IMR-90 (cell line): ENCODE measurements at regions of chr17 and their contacts with region 1.

Region 1: DNA sequence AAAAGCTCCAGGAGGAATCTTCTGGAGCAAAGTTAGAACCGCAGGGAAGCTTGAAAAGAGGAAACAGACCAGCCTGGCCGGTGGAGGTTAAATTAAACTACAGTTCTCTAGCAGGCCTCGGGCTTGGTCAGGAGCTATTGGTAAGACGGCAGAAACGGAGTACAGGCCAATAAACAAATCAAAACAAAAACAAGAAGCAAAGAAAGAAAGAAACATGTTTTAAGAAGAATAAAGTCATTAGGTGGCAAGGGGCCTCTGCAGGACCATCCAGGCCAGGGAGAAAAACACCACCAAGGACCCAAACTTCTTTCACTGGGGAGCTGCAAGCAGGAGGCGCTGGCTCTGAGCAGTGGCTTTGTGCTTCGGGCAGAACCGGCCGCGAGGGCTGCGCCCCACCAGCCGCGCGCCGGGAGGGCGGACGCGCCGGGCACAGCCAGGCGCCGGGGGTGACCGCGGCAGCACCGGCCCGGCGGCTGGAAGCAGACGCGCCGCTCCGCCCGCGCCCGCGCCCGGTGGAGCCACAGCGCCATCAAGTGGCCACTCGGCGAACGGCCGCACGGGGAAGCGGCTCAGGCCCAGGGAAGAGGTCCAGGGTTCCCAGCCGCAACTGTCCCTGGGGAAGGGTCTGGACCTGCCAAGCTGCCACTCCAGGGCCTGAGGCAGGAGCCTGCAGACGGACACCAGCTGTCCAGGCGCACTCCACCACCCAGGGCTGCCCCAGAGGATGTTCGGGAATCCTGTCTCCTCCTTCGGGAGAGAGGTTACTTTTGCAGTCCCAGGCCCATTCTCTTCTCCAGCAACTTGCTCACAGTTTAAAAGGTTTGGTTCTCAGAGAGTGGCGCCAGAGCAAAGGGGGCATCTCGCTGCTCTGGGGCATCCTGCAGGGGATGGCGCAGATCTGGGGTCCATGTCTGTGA is 419.4 kb downstream of the SOX9 start:
- DNase-seq: peak; percentile 61
- ATAC-seq: peak; percentile 98
- H3K4me3 ChIP-seq: peak overlapping the region; percentile 10; the same call in 1 of the 2 replicates
- H3K27ac ChIP-seq: peak overlapping the region; percentile 87
- H3K4me1 ChIP-seq: peaks cover 3% of the 10 kb centered on the region; the same call in 1 of the 2 replicates
- H3K27me3 ChIP-seq: no peaks in the 10 kb centered on the region
- CTCF ChIP-seq: peak; percentile 90
- POLR2A ChIP-seq: no peak; the same call in 1 of the 2 replicates
- RAD21 ChIP-seq: peak; percentile 95

Region 2: GRCh38 chr17:70767102-70767701 is 1773.0 kb before region 1 on chr17:
- CTCF ChIA-PET with region 1: no interaction called
- POLR2A ChIA-PET with region 1: no interaction called
- dilution Hi-C with region 1: no loop called
- in situ Hi-C with region 1: loop called (anchors 10 kb)
- intact Hi-C with region 1: loop called (anchors 1 kb)
- DNase-seq: peak; percentile 59
- ATAC-seq: peak; percentile 51; the same call in 1 of the 2 replicates
- H3K4me3 ChIP-seq: no peak overlapping the region
- H3K27ac ChIP-seq: no peak overlapping the region
- H3K4me1 ChIP-seq: no peaks in the 10 kb centered on the region
- H3K27me3 ChIP-seq: no peaks in the 10 kb centered on the region
- CTCF ChIP-seq: peak; percentile 78
- POLR2A ChIP-seq: no peak
- RAD21 ChIP-seq: peak; percentile 86

Region 3: GRCh38 chr17:71118039-71118438 is 1422.2 kb before region 1 on chr17:
- CTCF ChIA-PET with region 1: no interaction called
- POLR2A ChIA-PET with region 1: no interaction called
- dilution Hi-C with region 1: no loop called
- in situ Hi-C with region 1: loop called (anchors 25 kb)
- intact Hi-C with region 1: no loop called
- DNase-seq: peak; percentile 18
- ATAC-seq: no peak
- H3K4me3 ChIP-seq: no peak overlapping the region
- H3K27ac ChIP-seq: no peak overlapping the region
- H3K4me1 ChIP-seq: no peaks in the 10 kb centered on the region
- H3K27me3 ChIP-seq: no peaks in the 10 kb centered on the region
- CTCF ChIP-seq: peak; percentile 47
- POLR2A ChIP-seq: no peak
- RAD21 ChIP-seq: peak; percentile 61

Region 4: DNA sequence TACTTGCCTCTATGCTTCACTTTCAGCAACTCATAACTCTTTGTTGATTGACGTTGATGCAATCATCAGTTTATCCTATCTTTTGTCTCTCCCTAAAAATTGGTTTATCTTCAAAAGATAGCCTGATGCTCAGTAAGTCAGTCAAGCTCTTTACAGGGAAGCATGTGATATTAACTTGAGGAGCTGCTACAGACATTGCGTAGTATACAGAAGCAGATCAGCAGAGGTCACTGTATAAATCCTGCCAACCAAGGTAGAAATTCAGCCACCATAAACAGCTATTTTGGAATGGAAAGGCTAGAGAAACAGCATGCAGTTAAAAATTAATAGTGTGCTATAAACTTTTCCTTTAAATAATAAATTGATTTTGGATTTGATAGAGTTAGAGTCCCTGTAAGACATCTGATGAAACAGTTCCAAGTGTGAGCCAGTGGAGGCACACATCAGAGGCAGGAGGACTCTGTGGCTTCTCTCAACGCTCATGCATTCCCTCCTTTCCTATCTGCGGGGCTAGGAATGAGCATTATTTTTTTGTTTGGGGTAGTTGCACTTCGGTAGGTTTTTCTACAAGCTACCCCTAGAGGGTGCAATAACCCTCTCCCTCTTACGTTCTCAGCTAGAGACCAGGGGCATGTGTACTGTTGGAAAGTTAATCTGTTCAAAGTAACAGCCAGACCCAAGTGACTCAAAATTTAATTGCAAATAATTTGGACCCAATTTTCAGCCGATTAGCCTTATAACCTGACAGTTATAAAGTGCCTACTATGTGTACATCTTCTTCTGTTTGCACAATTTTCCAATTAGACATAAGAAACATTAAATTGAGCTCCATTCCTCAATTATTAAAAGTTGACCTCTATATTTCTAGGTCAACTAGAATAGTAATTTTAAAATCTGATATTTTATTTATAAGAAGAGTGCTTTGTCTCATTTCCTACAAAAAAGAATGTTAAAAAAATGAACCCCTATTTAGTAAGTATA is 1067.1 kb before region 1 on chr17:
- CTCF ChIA-PET with region 1: no interaction called
- POLR2A ChIA-PET with region 1: no interaction called
- dilution Hi-C with region 1: no loop called
- in situ Hi-C with region 1: loop called (anchors 10 kb)
- intact Hi-C with region 1: loop called (anchors 1 kb)
- DNase-seq: peak; percentile 70
- ATAC-seq: peak; percentile 95
- H3K4me3 ChIP-seq: no peak overlapping the region
- H3K27ac ChIP-seq: no peak overlapping the region
- H3K4me1 ChIP-seq: no peaks in the 10 kb centered on the region
- H3K27me3 ChIP-seq: no peaks in the 10 kb centered on the region
- CTCF ChIP-seq: peak; percentile 80
- POLR2A ChIP-seq: no peak
- RAD21 ChIP-seq: peak; percentile 84

Region 5: GRCh38 chr17:71959154-71959553 is 581.1 kb before region 1 on chr17:
- CTCF ChIA-PET with region 1: no interaction called
- POLR2A ChIA-PET with region 1: no interaction called
- dilution Hi-C with region 1: no loop called
- in situ Hi-C with region 1: loop called (anchors 25 kb)
- intact Hi-C with region 1: loop called (anchors 1 kb)
- DNase-seq: peak; percentile 8
- ATAC-seq: no peak
- H3K4me3 ChIP-seq: no peak overlapping the region
- H3K27ac ChIP-seq: no peak overlapping the region
- H3K4me1 ChIP-seq: no peaks in the 10 kb centered on the region
- H3K27me3 ChIP-seq: no peaks in the 10 kb centered on the region
- CTCF ChIP-seq: peak; percentile 44
- POLR2A ChIP-seq: no peak
- RAD21 ChIP-seq: peak; percentile 43

Region 6: DNA sequence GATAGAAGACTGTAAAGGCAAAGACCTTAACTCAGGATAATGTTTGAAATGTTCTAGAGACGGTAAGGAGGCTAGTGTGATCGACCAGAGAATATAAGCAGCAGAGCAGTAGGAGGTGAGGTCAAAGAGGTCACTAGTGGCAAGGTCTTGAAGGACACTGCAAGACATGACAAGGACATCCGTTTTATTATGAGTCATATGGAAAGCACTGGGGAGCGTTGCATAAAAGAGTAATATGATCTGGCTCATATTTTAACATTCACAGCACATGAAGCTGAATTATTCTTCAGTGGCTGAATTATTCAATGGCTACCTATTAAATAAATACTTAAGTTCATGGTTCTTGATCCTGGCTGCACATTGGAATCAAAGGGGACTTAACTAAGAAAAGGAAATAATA is 295.7 kb before region 1 on chr17:
- CTCF ChIA-PET with region 1: no interaction called
- POLR2A ChIA-PET with region 1: no interaction called
- dilution Hi-C with region 1: no loop called
- in situ Hi-C with region 1: no loop called
- intact Hi-C with region 1: no loop called
- DNase-seq: peak; percentile 34
- ATAC-seq: no peak
- H3K4me3 ChIP-seq: no peak overlapping the region
- H3K27ac ChIP-seq: no peak overlapping the region
- H3K4me1 ChIP-seq: no peaks in the 10 kb centered on the region; the same call in 1 of the 2 replicates
- H3K27me3 ChIP-seq: no peaks in the 10 kb centered on the region; the same call in 1 of the 2 replicates
- CTCF ChIP-seq: no peak
- POLR2A ChIP-seq: no peak
- RAD21 ChIP-seq: no peak

Region 7: GRCh38 chr17:72338847-72339790 is 201.1 kb before region 1 on chr17:
- CTCF ChIA-PET with region 1: interaction called, 7 read pairs
- POLR2A ChIA-PET with region 1: no interaction called
- dilution Hi-C with region 1: no loop called
- in situ Hi-C with region 1: no loop called
- intact Hi-C with region 1: loop called (anchors 1 kb)
- DNase-seq: peak; percentile 97
- ATAC-seq: peak; percentile 89
- H3K4me3 ChIP-seq: no peak overlapping the region
- H3K27ac ChIP-seq: peak overlapping the region; percentile 86
- H3K4me1 ChIP-seq: peaks cover 23% of the 10 kb centered on the region
- H3K27me3 ChIP-seq: no peaks in the 10 kb centered on the region
- CTCF ChIP-seq: no peak
- POLR2A ChIP-seq: peak; percentile 53; the same call in 1 of the 2 replicates
- RAD21 ChIP-seq: peak; percentile 23; the same call in 1 of the 2 replicates